Activated CD4-positive, alpha-beta T cell treated with anti-CD3 and anti-CD28 coated beads, Interleukin-2, amount 10 ng/mL, durations not matched to agents 24 days and 14 days (primary cell): ENCODE measurements at regions of chr13 and their contacts with region 1.

Region 1: GRCh38 chr13:30306762-30307193 is 573 bp downstream of the KATNAL1 start:
- DNase-seq: peak; percentile 98
- H3K4me3 Mint-ChIP-seq: peak overlapping the region; percentile 89
- H3K27ac Mint-ChIP-seq: peak overlapping the region; percentile 87
- H3K4me1 Mint-ChIP-seq: peaks cover 46% of the 10 kb centered on the region
- H3K27me3 Mint-ChIP-seq: no peaks in the 10 kb centered on the region

Region 2: DNA sequence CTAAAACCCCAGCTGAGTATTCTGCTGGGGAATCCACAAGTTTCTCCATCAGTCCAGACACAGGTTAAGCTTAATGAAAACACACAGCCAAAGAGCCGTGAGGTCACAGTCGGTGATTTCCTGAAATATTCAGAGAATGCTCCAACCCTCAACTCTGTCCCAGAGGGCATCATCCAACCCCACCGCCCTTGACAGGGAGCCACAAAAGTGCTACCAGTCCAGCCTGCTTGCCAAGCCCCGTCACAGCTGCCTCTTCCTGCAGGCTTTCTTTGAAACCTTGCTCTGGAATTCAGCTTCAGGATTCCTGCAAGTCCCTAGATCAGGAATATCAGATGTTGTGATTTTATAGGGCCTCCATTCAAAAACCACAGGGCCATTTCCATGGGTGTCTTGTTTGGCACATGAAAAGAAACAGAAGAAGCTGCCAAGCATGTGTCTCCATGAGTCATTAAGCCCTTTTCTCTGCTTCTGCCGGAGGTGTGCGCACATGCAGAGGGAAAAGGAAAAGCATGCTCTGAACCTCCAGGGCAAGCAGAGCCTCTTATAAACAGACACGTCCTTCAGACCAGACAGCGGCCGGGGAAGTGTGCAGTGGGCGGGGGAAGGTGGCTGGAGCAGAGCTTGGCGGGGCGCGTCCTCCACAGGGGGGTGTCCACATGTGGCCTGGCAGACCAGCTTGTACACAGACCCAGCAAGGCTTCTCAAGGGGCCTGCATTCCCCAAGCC is 164.1 kb before region 1 on chr13:
- intact Hi-C with region 1: loop called (anchors 5 kb)
- DNase-seq: peak; percentile 78
- H3K4me3 Mint-ChIP-seq: peak overlapping the region; percentile 37
- H3K27ac Mint-ChIP-seq: peak overlapping the region; percentile 93
- H3K4me1 Mint-ChIP-seq: peaks cover 54% of the 10 kb centered on the region
- H3K27me3 Mint-ChIP-seq: peaks cover 2% of the 10 kb centered on the region

Region 3: DNA sequence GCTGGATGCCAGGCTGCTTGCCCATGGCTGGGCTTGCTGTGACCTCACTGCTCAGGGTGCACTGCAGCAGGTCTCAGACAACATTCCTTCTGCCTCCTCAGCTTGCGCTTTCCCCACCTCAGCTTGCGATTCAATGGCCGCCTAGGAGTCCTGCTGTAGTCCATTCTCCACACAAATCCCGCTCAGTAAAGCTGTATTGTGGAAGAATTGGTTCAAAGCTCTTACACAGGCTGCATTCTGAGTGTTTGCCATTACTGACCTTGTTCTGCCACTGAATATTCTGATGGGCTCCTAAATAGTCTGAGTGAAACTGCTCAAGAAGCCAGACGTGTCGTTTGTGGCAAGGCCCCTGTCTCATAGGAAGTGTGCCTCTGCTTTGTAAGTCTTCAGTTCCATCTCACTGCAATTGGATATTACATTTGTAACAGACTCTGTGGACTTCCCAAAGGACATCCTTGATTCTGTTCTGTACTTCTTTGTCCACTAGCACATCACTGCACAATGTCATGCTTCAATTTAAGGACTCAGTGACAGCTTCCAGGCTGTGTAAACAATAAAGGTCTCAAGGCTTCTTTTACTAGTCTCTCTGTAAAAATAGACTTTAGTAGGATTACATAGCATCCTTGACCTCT is 49.2 kb before region 1 on chr13:
- intact Hi-C with region 1: loop called (anchors 10 kb)
- DNase-seq: no peak
- H3K4me3 Mint-ChIP-seq: no peak overlapping the region
- H3K27ac Mint-ChIP-seq: no peak overlapping the region
- H3K4me1 Mint-ChIP-seq: peaks cover 15% of the 10 kb centered on the region
- H3K27me3 Mint-ChIP-seq: no peaks in the 10 kb centered on the region

Region 4: GRCh38 chr13:30292325-30292724 is 14.5 kb before region 1 on chr13:
- intact Hi-C with region 1: no loop called
- DNase-seq: peak; percentile 43
- H3K4me3 Mint-ChIP-seq: no peak overlapping the region
- H3K27ac Mint-ChIP-seq: no peak overlapping the region
- H3K4me1 Mint-ChIP-seq: peaks cover 6% of the 10 kb centered on the region
- H3K27me3 Mint-ChIP-seq: peaks cover 6% of the 10 kb centered on the region

Region 5: DNA sequence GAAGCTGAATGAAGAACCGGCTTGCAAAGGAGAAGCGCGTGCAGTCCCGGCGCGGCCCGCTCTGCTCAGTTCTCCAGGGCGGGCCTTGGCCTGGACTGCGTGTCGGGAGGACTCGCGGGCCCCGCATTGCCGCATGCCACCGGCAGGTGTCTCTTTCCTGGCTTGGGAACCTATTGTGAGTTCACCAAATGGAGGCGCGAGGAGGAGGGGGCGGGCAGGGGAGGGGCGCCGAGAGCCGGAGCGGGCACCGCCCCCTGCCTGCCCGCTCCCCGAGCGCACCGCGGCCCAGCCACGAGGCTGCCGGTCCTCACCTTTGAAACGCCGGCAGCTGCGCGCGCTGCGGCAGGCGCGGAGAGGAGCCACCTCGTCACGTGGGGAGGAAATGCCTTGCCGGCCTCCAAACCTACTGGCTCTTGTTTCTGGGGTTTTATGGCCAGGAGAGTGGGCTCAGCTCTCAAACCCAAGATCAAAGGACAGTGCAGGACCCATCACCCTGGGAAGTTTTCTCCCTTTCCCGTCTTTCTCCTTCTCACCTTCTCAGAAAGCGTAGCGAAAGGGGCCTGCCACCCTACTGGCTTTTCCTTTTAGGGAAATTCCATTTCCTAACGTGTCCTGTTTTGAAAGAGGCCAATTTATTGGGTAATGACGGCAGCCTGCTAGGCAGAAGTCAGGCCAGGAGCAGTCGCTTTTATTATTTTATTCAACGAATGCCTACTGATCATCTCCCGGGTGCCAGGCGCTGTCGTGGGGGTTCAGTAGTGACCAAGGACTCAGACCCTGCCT is 101.7 kb after region 1 on chr13:
- intact Hi-C with region 1: loop called (anchors 5 kb)
- DNase-seq: peak; percentile 97
- H3K4me3 Mint-ChIP-seq: peak overlapping the region; percentile 73
- H3K27ac Mint-ChIP-seq: peak overlapping the region; percentile 80
- H3K4me1 Mint-ChIP-seq: peaks cover 23% of the 10 kb centered on the region
- H3K27me3 Mint-ChIP-seq: peaks cover 4% of the 10 kb centered on the region

Region 6: DNA sequence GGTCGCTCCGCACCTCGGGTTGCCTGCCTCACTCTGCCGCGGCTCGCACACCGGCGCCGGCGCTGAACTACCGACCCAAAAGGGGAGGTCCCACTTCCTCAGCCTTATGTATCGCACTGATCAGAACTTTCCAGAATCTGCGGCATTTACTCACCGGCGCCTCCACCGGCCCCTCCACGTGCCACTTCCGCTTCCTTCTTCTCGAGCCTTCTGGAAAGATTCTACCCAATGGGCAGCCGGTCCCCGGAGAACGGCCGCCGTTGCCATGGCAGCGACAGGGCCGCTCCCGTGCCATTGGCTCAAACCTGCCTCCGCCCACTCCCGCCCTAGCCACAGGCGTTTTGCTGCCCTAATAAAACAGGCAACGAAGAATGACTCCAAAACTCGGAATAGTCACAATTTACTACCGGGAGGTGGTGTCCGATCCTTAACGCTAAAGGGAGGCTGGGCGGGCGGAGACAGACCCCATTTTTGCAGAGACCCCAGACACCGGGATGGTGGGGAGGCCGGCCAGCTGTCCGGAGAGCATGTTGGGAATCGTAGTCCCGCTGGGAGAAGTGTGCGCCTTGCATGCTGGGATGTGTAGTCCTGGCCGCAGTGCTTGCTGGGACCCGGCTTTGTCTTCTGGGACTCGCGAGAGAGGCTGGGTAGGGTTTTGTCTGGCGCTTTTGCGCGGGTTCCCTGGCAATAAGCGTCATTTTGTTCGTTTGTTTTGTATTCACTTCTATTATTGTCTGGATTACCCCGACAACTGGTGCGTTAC is 855.2 kb after region 1 on chr13 and contains the start of gene HSPH1:
- intact Hi-C with region 1: loop called (anchors 5 kb)
- DNase-seq: peak; percentile 100
- H3K4me3 Mint-ChIP-seq: peak within 1 kb of the TSS; percentile 99
- H3K27ac Mint-ChIP-seq: peak within 1 kb of the TSS; percentile 99
- H3K4me1 Mint-ChIP-seq: peaks cover 45% of the 10 kb centered on the region
- H3K27me3 Mint-ChIP-seq: peaks cover 2% of the 10 kb centered on the region
- total RNA-seq, gene HSPH1: 381 and 385 TPM in 2 replicates